Activated T-helper 2 cell treated with anti-CD3 and anti-CD28 coated beads, Interferon-gamma antibody, Interleukin-2, Interleukin-4, amounts not matched to agents 10 μg/mL and 5 μg/mL and 100 μg/mL, durations not matched to agents 14 hours and 24 hours and 36 hours (primary cell): ENCODE measurements at regions of chr9 and their contacts with region 1.

Region 1: DNA sequence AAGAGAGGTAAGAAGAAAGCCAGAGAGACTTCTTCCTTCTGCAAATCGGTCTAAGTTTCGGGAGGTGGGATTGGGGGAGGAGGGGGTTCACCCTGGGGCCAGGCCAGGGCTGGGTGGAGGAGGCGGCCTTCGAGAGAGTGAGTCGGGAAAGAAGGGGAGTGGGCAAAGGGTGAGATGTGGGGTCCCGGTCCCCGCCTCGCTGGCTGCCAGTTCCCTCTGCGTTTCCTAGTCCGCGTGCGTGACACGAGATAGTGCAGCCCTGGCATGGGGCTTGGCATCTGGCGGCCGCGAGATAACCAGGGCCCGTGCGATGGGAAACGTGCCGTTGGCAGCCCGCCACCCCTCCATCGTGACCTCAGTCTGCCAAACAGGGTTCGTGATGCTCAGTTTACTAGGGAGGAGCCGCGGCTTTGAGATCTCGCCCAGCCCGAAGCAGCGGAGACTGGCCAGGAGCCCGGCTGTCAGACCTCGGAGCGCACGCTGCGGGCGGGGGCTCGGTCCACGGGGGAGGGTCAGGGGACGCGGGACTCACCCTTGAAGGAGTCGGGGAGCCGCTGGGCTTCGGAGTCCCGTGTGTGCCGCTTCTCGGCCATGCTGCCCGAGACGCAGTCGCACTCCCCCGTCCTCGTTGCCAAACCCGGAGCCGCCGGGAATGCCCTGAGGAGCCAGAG is at the start of gene STOM:
- DNase-seq: no peak
- H3K4me3 Mint-ChIP-seq: peak within 1 kb of the TSS; percentile 84
- H3K27ac Mint-ChIP-seq: peak within 1 kb of the TSS; percentile 90
- H3K4me1 Mint-ChIP-seq: peaks cover 35% of the 10 kb centered on the region
- H3K27me3 Mint-ChIP-seq: no peaks in the 10 kb centered on the region
- total RNA-seq, gene STOM: 18.9 and 21.0 TPM in 2 replicates

Region 2: GRCh38 chr9:121107041-121107440 is 262.7 kb before region 1 on chr9:
- intact Hi-C with region 1: no loop called
- DNase-seq: no peak
- H3K4me3 Mint-ChIP-seq: no peak overlapping the region
- H3K27ac Mint-ChIP-seq: no peak overlapping the region
- H3K4me1 Mint-ChIP-seq: peaks cover 26% of the 10 kb centered on the region
- H3K27me3 Mint-ChIP-seq: no peaks in the 10 kb centered on the region

Region 3: GRCh38 chr9:121201738-121202533 is 167.8 kb before region 1 on chr9 and contains the start of gene RAB14:
- intact Hi-C with region 1: loop called (anchors 10 kb)
- DNase-seq: peak; percentile 100
- H3K4me3 Mint-ChIP-seq: peak within 1 kb of the TSS; percentile 96
- H3K27ac Mint-ChIP-seq: peak within 1 kb of the TSS; percentile 87
- H3K4me1 Mint-ChIP-seq: peaks cover 46% of the 10 kb centered on the region
- H3K27me3 Mint-ChIP-seq: no peaks in the 10 kb centered on the region
- total RNA-seq, gene RAB14: 62.0 and 63.2 TPM in 2 replicates

Region 4: GRCh38 chr9:121322037-121322775 is 47.5 kb before region 1 on chr9:
- intact Hi-C with region 1: loop called (anchors 5 kb)
- DNase-seq: no peak
- H3K4me3 Mint-ChIP-seq: no peak overlapping the region
- H3K27ac Mint-ChIP-seq: no peak overlapping the region
- H3K4me1 Mint-ChIP-seq: peaks cover 17% of the 10 kb centered on the region
- H3K27me3 Mint-ChIP-seq: no peaks in the 10 kb centered on the region

Region 5: DNA sequence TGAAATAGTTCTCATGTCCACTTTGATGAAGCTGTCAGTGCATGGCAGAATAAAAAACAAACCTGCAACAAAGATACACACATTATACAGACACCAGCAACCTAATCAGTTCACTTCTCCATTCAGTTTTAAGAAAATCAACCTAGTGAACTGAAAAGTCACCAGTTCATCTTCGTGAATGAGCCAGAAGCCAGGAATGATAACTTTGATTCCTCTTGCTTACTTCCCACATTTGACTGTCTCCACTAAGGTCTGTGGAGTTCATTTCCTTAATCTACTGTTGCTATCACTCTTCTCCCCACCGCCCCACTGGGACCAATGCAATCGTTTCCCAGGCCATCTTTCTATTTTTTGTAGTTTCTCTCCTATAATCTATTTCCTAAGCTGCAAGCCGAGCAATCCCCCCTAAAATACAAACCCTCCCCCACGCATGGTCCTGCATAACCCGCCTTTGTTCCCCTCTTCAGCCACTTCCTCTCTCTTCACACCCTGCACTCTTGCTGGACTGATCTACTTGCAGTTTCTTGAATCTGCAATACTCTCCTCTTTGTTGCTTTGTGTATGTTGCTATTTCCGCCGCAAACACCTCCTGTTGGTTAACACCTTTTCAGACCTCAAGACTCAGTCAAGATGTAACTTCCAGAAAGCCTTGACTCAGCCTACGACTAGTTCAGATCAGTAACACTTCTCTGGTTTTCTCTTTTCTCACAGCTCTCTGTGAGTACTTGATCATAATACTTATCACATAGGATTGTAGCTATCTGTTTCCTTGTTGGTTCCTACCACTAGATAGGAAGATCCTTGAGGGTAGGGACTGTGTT is 16.3 kb before region 1 on chr9:
- intact Hi-C with region 1: loop called (anchors 2 kb)
- DNase-seq: peak; percentile 32
- H3K4me3 Mint-ChIP-seq: no peak overlapping the region
- H3K27ac Mint-ChIP-seq: peak overlapping the region; percentile 6
- H3K4me1 Mint-ChIP-seq: peaks cover 24% of the 10 kb centered on the region
- H3K27me3 Mint-ChIP-seq: no peaks in the 10 kb centered on the region

Region 6: DNA sequence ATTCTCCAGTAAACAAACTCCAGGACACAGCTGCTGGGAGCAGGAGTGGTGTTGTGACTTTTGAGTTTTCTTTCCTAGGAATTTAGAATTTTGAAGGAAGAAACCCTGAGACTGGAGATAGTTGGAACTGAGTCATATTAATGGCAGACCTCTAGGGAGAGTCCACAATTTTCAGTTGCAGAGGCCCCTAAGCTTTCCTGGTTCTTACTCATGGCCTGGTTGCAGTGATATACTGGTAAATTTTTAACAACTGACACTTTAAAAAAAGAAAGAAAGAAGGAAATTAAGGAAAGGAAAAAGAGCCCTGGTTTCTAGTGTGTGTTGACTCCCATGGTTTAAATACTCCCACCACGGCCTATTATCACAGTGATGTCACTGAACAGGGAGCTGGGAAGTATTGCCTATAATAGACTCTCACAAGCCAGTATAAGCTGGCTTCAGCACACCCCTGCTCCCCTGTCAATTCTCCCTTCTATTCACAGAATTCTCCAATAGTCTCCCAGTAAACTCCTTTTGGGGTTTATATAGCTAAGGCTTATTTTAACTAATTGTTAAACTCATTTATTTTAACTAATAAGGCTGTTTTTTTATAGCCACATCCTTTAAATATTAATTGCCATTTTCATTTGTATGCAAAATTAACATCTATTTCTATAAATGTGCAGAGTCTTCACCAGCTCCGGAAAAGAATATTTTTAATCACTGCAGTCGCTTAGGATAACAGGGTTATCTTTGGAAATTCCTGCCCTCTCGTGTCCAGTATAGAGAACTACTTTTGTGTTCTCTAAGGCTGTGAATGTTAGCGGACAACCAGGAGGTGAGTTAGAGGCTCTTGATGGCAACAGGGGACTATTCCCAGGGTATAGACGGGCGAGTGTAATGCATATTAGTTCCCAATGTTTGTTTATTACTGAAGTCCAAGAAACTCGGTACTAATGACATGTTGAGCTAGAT is 70.3 kb after region 1 on chr9:
- intact Hi-C with region 1: no loop called
- DNase-seq: no peak
- H3K4me3 Mint-ChIP-seq: no peak overlapping the region
- H3K27ac Mint-ChIP-seq: no peak overlapping the region
- H3K4me1 Mint-ChIP-seq: no peaks in the 10 kb centered on the region
- H3K27me3 Mint-ChIP-seq: peaks cover 53% of the 10 kb centered on the region

Region 7: DNA sequence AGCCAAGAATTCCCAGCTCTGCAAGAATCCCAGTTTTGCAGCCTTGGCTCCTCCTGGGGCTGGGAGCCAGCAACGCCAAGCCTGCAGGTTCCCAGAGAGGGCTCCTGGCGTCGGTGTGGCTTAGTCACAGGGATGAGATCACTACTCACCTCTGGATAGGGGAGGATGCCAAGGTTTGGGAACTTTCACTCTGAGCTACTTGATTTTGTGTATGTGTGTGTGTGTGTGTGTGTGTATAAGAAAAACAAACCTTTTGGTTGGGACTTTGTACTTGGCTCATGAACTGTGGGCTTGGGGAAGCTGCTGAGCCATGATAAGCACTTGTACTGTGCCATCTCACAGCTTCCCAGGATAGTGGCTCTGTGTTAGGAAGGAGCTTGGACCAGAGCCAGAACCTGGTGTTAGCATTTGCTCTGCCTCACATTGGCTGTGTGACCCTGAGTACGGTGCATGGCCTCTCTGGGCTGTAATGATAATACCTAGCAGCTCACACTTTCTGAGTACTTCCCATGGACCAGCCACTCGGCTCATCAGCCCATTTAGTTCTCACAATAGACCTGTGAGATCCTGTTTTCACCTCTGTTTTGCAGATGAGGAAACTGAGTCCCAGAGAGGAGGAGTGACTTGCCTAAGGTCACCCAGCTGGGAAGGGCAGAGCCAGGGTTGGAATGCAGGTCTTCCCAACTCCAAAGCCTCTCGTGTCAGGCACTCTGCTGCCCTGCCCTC is 240.3 kb after region 1 on chr9:
- intact Hi-C with region 1: no loop called
- DNase-seq: no peak
- H3K4me3 Mint-ChIP-seq: no peak overlapping the region
- H3K27ac Mint-ChIP-seq: no peak overlapping the region
- H3K4me1 Mint-ChIP-seq: peaks cover 2% of the 10 kb centered on the region
- H3K27me3 Mint-ChIP-seq: peaks cover 22% of the 10 kb centered on the region